OCI-LY7 (cell line): ENCODE measurements at regions of chr3 and their contacts with region 1.

Region 1: DNA sequence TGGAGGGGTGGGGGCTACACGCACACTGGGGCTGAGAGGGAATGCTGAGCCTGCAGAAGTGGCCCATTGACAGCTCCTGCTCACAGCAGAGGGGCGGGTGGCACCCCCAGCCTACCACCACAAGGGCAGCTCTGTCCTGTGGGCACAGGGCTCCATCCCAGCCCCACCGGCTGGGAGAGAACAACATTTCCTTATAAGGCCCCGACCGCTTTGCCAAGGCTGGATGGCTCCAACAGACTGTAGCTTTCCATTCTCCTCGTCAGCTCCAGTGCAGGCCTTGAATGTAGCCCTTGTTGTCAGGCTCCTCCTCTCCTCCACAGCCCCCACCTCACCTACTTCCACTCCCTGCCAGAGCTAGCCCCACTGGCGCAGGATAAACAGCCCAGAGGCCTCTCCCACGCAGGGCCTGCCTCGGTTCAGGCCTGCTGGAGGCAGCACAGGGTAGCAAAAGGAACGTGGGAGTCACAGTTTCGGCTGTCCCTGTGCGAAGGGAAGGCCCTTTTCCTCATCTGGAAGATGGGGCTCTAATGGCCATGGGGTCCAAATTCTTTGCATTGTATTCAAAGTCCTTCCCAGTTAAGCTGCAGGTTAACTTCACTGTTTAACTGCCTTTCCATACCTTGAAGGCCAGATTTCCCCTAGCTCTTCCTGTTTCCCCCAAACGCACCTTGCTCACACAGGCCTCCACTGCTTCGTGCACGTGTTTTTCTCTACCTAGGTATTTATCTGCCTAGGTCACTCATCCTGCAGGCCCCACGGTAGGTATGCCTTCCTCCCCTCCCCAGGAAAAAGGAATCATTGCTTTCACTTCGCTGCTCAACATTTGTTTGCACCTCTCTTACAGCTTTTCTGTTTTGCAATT is 101.6 kb upstream of the LPP start:
- DNase-seq: no peak
- H3K4me3 ChIP-seq: no peak overlapping the region
- H3K27ac ChIP-seq: no peak overlapping the region
- H3K4me1 ChIP-seq: peaks cover 69% of the 10 kb centered on the region
- CTCF ChIP-seq: peak; percentile 34; the same call in 1 of the 2 replicates

Region 2: GRCh38 chr3:187319699-187320302 is 732.6 kb before region 1 on chr3:
- CTCF ChIA-PET with region 1: no interaction called
- POLR2A ChIA-PET with region 1: no interaction called
- intact Hi-C with region 1: no loop called
- DNase-seq: peak; percentile 60
- H3K4me3 ChIP-seq: no peak overlapping the region
- H3K27ac ChIP-seq: no peak overlapping the region
- H3K4me1 ChIP-seq: no peaks in the 10 kb centered on the region
- CTCF ChIP-seq: peak; percentile 80

Region 3: DNA sequence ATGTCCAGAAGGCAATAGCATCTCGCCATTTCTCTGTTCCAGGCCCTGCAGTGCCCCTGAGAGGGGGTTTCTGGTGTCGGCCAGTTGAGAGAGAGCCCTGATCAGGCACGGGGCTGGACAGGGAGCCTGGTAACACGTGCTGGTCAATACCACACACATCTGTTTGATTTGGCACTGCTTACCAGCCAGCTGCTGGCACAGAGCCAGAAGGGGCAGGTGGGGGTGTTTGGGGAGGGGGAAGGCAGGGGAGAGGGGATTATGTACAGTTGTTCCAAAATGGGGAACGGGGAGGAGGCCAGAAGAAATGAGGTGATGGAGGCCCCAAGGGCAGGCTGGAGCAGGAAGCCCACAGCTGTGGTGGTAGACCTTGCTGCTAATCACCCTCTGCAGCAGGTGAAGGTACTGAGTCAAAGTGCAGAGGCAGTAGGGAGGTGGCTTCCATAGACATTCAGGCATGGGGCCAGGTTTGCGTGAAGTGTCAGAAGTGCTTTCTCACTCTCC is 52.0 kb before region 1 on chr3:
- CTCF ChIA-PET with region 1: no interaction called
- POLR2A ChIA-PET with region 1: interaction called, 11 read pairs
- intact Hi-C with region 1: no loop called
- DNase-seq: peak; percentile 82
- H3K4me3 ChIP-seq: peak overlapping the region; percentile 60
- H3K27ac ChIP-seq: peak overlapping the region; percentile 96
- H3K4me1 ChIP-seq: peaks cover 83% of the 10 kb centered on the region
- CTCF ChIP-seq: no peak

Region 4: GRCh38 chr3:188037216-188037718 is 15.1 kb before region 1 on chr3:
- CTCF ChIA-PET with region 1: interaction called, 6 read pairs
- POLR2A ChIA-PET with region 1: interaction called, 15 read pairs
- intact Hi-C with region 1: no loop called
- DNase-seq: no peak
- H3K4me3 ChIP-seq: no peak overlapping the region
- H3K27ac ChIP-seq: no peak overlapping the region
- H3K4me1 ChIP-seq: peaks cover 42% of the 10 kb centered on the region
- CTCF ChIP-seq: 0 out of 2 replicates have a peak, but pooled peaks have one; percentile 27